Mucosa of descending colon (tissue), 3 donors: ENCODE measurements at regions of chr5 and their contacts with region 1.

Region 1: GRCh38 chr5:115098041-115098702 is 71.5 kb downstream of the TRIM36 start:
- DNase-seq: peak in 1 of 3 donors; percentile 65
- ATAC-seq: peak; percentile 78
- H3K4me3 ChIP-seq: no peak overlapping the region
- H3K4me1 ChIP-seq: no peaks in the 10 kb centered on the region
- CTCF ChIP-seq: peak; percentile 47

Region 2: DNA sequence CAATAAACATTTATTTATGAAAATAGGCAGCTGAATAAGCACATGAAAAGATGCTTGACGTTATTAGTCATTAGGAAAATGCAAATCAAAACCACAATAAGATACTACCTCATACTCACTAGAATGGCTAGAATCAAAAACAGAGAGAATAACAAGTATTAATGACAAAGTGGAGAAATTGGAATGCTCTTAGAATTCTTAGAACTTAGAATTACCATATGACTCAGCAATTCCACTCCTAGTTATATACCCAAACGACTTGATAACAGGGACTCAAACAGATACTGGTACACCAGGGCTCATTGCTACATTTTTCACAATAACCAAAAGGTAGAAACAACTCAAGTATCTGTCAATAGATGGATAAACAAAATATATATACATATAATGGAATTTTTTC is 86.6 kb after region 1 on chr5:
- intact Hi-C with region 1: no loop called
- DNase-seq: no peak
- ATAC-seq: no peak
- H3K4me3 ChIP-seq: no peak overlapping the region
- H3K4me1 ChIP-seq: peaks cover under 1% of the 10 kb centered on the region
- CTCF ChIP-seq: no peak

Region 3: DNA sequence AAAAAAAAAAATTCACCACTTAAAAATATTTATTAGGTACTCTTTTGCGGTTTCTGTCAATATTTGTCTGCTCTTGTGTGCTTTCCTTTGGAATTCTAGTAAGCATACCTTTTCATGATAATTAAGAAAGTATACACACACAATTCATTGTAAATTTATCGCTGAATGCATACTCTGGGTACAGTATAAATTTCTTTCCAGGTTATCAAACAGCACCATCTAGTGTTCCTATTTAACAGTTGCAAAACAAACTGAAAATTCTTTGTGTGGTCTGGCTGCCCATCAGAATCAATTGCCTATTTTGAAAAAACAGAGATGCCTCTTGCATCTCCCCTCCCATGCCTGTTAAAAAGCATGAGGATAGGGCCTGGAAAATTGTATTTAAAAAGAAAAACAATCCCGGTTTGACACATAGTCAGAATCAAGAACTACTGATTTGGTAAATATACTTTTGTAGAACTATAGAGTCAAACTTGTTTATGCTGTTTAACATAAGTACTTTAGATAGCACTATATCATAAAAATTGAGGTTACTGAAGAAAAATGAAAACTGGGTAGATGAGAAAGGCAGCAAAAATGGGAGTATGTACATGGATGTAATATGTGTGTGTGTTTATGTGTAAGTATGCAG is 148.3 kb after region 1 on chr5:
- intact Hi-C with region 1: loop called in 1 of 2 experiments (anchors 2 kb)
- DNase-seq: no peak
- ATAC-seq: peak; percentile 79
- H3K4me3 ChIP-seq: no peak overlapping the region
- H3K4me1 ChIP-seq: peaks cover 7% of the 10 kb centered on the region
- CTCF ChIP-seq: peak; percentile 35

Region 4: GRCh38 chr5:115487756-115488155 is 389.6 kb after region 1 on chr5:
- intact Hi-C with region 1: no loop called
- DNase-seq: no peak
- ATAC-seq: no peak
- H3K4me3 ChIP-seq: no peak overlapping the region
- H3K4me1 ChIP-seq: no peaks in the 10 kb centered on the region
- CTCF ChIP-seq: no peak